ENCODE measurements at regions of chr4 and their contacts with region 1.

Region 1: GRCh38 chr4:157045507-157046127 is 30.3 kb upstream of the GLRB start:
- DNase-seq: no peak
- ATAC-seq: peak in 6 of 8 donors; percentile 56 to 85 (median 72)
- H3K4me3 ChIP-seq: no peak overlapping the region
- H3K27ac ChIP-seq: no peak overlapping the region
- H3K4me1 ChIP-seq: no peaks in the 10 kb centered on the region
- H3K27me3 ChIP-seq: no peaks in the 10 kb centered on the region
- CTCF ChIP-seq: peak; percentile 39 to 82 (median 72)

Region 2: GRCh38 chr4:156475322-156475721 is 570.3 kb before region 1 on chr4:
- intact Hi-C with region 1: loop called in 8 of 10 experiments (anchors 2 to 10 kb)
- DNase-seq: no peak
- ATAC-seq: peak in 6 of 8 donors; percentile 42 to 71 (median 63)
- H3K4me3 ChIP-seq: no peak overlapping the region
- H3K27ac ChIP-seq: no peak overlapping the region
- H3K4me1 ChIP-seq: no peaks in the 10 kb centered on the region
- H3K27me3 ChIP-seq: no peaks in the 10 kb centered on the region
- CTCF ChIP-seq: peak; percentile 20 to 67 (median 55)

Region 3: GRCh38 chr4:156594624-156595023 is 451.0 kb before region 1 on chr4:
- intact Hi-C with region 1: loop called in 1 of 10 experiments (anchors 10 kb)
- DNase-seq: peak; percentile 8 to 35
- ATAC-seq: peak in 2 of 8 donors; percentile 39 to 55
- H3K4me3 ChIP-seq: no peak overlapping the region
- H3K27ac ChIP-seq: no peak overlapping the region
- H3K4me1 ChIP-seq: peaks cover 0 to 25% (median 0%) of the 10 kb centered on the region in 9 donors
- H3K27me3 ChIP-seq: peaks cover 0 to 5% (median 0%) of the 10 kb centered on the region in 7 donors
- CTCF ChIP-seq: no peak

Region 4: DNA sequence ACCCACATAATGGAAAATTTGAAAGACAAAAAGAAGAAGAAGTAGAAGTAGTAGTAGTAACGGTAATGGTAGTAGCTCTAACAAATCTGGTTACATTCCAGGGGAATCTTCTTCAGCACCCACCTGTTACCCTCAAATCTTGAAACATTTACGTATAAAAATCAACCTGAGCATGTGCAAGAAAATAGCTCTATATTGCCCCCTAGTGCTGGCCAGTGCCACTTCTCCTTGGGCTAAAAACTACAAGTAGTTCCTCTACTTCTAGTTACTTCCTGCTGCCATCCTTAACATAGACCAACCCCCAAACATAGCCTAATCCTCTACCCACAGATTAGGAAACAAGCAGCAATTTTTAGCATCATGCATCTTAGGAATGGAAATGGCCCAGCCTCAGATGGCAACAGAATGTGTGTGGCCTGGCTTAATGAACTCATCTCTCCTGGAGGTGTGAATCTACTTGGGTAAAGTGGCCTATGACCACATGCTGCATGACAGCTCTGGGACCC is 77.1 kb before region 1 on chr4:
- intact Hi-C with region 1: loop called in 5 of 10 experiments (anchors 5 to 10 kb)
- DNase-seq: peak; percentile 15 to 57
- ATAC-seq: peak in 5 of 8 donors; percentile 25 to 43 (median 38)
- H3K4me3 ChIP-seq: peak overlapping the region in 5 of 10 donors; percentile 74 to 86 (median 80)
- H3K27ac ChIP-seq: peak overlapping the region in 5 of 10 donors; percentile 6 to 87 (median 18)
- H3K4me1 ChIP-seq: peaks cover 0 to 53% (median 30%) of the 10 kb centered on the region in 9 donors
- H3K27me3 ChIP-seq: peaks cover 0 to 7% (median 0%) of the 10 kb centered on the region in 7 donors
- CTCF ChIP-seq: peak; percentile 60 to 82 (median 79)

Region 5: GRCh38 chr4:156983366-156983765 is 62.3 kb before region 1 on chr4:
- intact Hi-C with region 1: loop called in 4 of 10 experiments (anchors 10 kb)
- DNase-seq: no peak
- ATAC-seq: no peak
- H3K4me3 ChIP-seq: no peak overlapping the region
- H3K27ac ChIP-seq: no peak overlapping the region
- H3K4me1 ChIP-seq: no peaks in the 10 kb centered on the region
- H3K27me3 ChIP-seq: no peaks in the 10 kb centered on the region
- CTCF ChIP-seq: peak in 6 of 9 donors; percentile 25 to 54 (median 40)

Region 6: GRCh38 chr4:157096439-157096838 is 50.8 kb after region 1 on chr4:
- intact Hi-C with region 1: no loop called
- DNase-seq: no peak
- ATAC-seq: no peak
- H3K4me3 ChIP-seq: no peak overlapping the region
- H3K27ac ChIP-seq: no peak overlapping the region
- H3K4me1 ChIP-seq: peaks cover 0 to 7% (median 0%) of the 10 kb centered on the region in 9 donors
- H3K27me3 ChIP-seq: no peaks in the 10 kb centered on the region
- CTCF ChIP-seq: no peak

Measured in heart right ventricle (tissue), 16 donors.